ENCODE measurements at regions of chr1 and their contacts with region 1.

Region 1: DNA sequence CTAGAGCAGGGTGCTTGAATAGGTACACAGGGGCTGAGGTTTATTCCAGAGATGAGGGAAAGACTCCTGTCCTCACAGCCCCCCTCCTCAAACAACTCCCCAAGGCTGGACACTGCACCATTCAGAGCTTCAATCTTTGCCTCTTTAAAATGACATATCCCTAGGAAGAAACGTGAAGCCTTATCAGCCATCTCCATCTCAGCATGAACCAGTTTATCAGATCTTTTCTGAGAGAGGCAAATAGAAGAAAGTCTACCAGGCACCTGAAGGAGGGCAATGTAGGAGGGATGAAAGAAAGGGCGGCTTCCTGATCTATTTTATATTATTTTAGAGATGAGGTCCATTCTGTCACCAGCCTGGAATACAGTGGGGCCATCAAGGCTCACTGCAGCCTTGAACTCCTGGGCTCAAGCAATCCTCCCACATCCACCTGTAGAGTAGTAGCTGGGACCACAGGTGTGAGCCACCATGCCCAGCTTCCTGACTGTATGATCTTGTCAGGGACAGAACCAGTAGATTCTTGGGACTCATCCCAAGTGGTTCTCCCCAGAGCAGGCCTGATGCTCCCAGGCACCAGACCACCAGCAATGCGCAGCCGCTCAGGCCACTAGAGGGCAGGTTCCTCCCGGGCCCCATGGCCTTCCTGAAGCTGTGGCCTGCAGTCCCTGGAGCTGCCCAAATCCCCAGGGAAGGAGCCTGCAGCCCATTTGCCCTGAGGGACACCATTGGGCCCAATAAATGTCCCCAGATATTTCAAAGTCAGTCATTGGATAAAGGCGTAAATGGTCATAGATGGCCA is 44.4 kb upstream of the GOLT1A start:
- DNase-seq: no peak
- H3K4me3 ChIP-seq: no peak overlapping the region
- CTCF ChIP-seq: peak; percentile 86

Region 2: GRCh38 chr1:204213668-204214662 is 44.2 kb before region 1 on chr1 and contains the start of gene GOLT1A:
- CTCF ChIA-PET with region 1: interaction called, 40 read pairs
- POLR2A ChIA-PET with region 1: no interaction called
- DNase-seq: peak; percentile 59
- H3K4me3 ChIP-seq: peak within 1 kb of the TSS; percentile 8
- CTCF ChIP-seq: peak; percentile 75

Region 3: DNA sequence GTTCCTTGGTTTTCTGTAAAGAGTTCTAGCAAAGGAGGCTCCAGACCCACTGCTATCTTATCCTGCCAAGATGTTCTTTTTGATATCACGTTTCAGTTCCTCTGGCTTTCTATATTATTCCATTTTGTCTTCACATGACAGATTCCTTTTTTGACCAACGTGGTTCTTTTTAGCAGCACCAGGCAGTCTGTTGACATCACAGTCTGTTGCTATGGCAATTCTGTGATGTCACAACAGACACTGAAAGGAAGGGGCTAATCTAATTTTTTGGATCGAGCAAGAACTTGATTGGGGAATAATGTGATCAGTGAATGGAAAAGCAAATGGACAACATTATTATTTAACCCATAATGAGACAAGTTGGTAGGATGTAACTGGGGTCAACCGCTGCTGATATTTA is 20.1 kb after region 1 on chr1:
- CTCF ChIA-PET with region 1: interaction called, 17 read pairs
- POLR2A ChIA-PET with region 1: no interaction called
- DNase-seq: no peak
- H3K4me3 ChIP-seq: no peak overlapping the region
- CTCF ChIP-seq: no peak

Region 4: GRCh38 chr1:204307334-204307883 is 49.3 kb after region 1 on chr1:
- CTCF ChIA-PET with region 1: interaction called, 12 read pairs
- POLR2A ChIA-PET with region 1: no interaction called
- DNase-seq: no peak
- H3K4me3 ChIP-seq: peak overlapping the region; percentile 56
- CTCF ChIP-seq: peak; percentile 23

Region 5: DNA sequence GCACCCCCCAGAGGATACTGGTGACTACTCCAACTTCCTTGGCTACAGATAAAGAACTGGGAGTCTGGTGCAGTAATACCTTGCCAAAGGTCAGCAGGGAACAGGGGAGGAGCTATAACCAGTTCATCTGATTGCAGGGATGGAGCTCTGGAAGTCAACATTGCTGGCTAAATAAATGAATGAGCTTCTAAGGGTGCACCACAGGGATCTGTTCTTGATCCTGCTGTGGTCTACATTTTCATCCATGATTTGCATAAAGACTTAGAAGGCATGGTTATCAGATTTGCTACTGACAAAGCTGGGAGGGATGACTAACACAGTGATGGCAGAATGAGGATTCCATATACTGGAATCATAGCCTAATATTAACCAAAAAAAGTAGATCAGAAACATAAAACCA is 83.2 kb after region 1 on chr1:
- CTCF ChIA-PET with region 1: interaction called, 34 read pairs
- POLR2A ChIA-PET with region 1: no interaction called
- DNase-seq: peak; percentile 33
- H3K4me3 ChIP-seq: no peak overlapping the region
- CTCF ChIP-seq: no peak

Region 6: GRCh38 chr1:204506961-204507387 is 248.8 kb after region 1 on chr1:
- CTCF ChIA-PET with region 1: interaction called, 16 read pairs
- POLR2A ChIA-PET with region 1: no interaction called
- DNase-seq: peak; percentile 79
- H3K4me3 ChIP-seq: peak overlapping the region; percentile 55
- CTCF ChIP-seq: no peak

Measured in AG04449 (cell line).